Heart right ventricle (tissue), 16 donors: ENCODE measurements at regions of chr4 and their contacts with region 1.

Region 1: GRCh38 chr4:123250843-123251242 is 145.8 kb upstream of the SPRY1 start:
- DNase-seq: peak; percentile 33 to 72
- ATAC-seq: peak; percentile 51 to 89 (median 81)
- H3K4me3 ChIP-seq: no peak overlapping the region
- H3K27ac ChIP-seq: peak overlapping the region in 8 of 10 donors; percentile 1 to 71 (median 45)
- H3K4me1 ChIP-seq: peaks cover 2 to 54% (median 44%) of the 10 kb centered on the region in 9 donors
- H3K27me3 ChIP-seq: no peaks in the 10 kb centered on the region
- CTCF ChIP-seq: no peak

Region 2: GRCh38 chr4:123340381-123340701 is 89.5 kb after region 1 on chr4:
- intact Hi-C with region 1: loop called in 3 of 10 experiments (anchors 5 kb)
- DNase-seq: no peak
- ATAC-seq: peak; percentile 19 to 86 (median 82)
- H3K4me3 ChIP-seq: no peak overlapping the region
- H3K27ac ChIP-seq: peak overlapping the region; percentile 63 to 87 (median 77)
- H3K4me1 ChIP-seq: peaks cover 3 to 60% (median 27%) of the 10 kb centered on the region in 9 donors
- H3K27me3 ChIP-seq: no peaks in the 10 kb centered on the region
- CTCF ChIP-seq: no peak

Region 3: GRCh38 chr4:123390846-123391456 is 140.1 kb after region 1 on chr4:
- intact Hi-C with region 1: loop called in 6 of 10 experiments (anchors 2 to 10 kb)
- DNase-seq: no peak
- ATAC-seq: no peak
- H3K4me3 ChIP-seq: no peak overlapping the region
- H3K27ac ChIP-seq: peak overlapping the region in 1 of 10 donors; percentile 26
- H3K4me1 ChIP-seq: peaks cover 0 to 16% (median 12%) of the 10 kb centered on the region in 9 donors
- H3K27me3 ChIP-seq: no peaks in the 10 kb centered on the region
- CTCF ChIP-seq: peak; percentile 25 to 73 (median 59)